Naive thymus-derived CD4-positive, alpha-beta T cell (primary cell): ENCODE measurements at regions of chr15 and their contacts with region 1.

Region 1: GRCh38 chr15:75201609-75202250 is at the start of gene C15orf39:
- DNase-seq: peak; percentile 66 to 88 (median 84)
- ATAC-seq: peak; percentile 78
- H3K4me3 ChIP-seq: peak within 1 kb of the TSS; percentile 84
- H3K4me3 Mint-ChIP-seq: peak within 1 kb of the TSS; percentile 89 to 98 (median 94)
- H3K27ac ChIP-seq: peak within 1 kb of the TSS; percentile 92
- H3K27ac Mint-ChIP-seq: peak within 1 kb of the TSS; percentile 69 to 95 (median 88)
- H3K4me1 ChIP-seq: peaks cover 26 to 27% of the 10 kb centered on the region in 2 donors
- H3K4me1 Mint-ChIP-seq: peaks cover 19 to 68% (median 39%) of the 10 kb centered on the region in 7 donors
- H3K27me3 ChIP-seq: no peaks in the 10 kb centered on the region
- H3K27me3 Mint-ChIP-seq: no peaks in the 10 kb centered on the region
- total RNA-seq, gene C15orf39: 30.9 to 124 (median 50.5) TPM

Region 2: DNA sequence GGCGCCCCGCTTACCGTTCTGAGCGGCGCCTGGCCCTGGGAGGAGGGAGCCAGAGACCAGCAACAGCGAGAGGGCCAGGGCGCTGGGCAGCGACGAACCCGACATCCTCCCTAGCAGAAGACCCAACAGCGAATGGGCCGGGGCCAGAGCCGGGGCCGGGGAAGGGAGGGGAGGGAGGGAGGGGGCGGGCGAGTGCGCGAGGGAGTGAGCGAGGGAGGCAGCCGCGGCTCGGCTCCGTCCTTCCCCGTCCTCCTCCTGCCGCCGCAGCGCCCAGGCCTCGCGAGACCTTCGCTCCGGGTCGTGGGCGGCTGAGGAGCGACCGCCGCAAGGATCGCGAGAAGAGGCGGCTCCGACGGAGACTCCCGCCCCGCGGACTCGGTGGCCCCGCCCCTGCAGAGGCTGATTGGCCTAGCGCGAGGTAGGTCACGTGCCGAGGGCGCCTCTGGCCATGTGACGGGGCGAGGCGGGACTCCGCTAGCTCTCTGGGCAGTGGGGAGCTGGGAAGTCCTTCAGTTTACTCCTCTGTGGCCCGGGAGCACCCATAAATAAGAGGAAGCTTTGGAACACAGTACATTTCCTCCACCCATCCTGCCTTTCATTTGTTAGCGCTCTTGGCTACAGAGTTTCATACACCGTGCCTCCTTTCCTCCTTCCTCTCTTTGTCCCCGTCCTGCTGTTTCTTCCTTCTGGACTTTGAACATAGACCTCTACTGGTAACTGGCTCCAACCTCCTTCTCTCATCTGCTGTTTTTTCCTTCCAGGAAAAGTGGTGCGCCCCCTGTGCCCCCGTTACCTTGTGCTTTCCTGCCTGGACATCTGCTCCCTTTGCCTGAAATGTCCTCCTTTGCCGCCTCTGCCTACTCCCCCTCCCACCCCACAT is 1568.4 kb before region 1 on chr15 and contains the start of gene NPTN:
- CTCF ChIA-PET with region 1: no interaction called
- POLR2A ChIA-PET with region 1: no interaction called
- intact Hi-C with region 1: loop called in 1 of 2 experiments (anchors 5 kb)
- DNase-seq: peak; percentile 96 to 99 (median 97)
- ATAC-seq: peak; percentile 95
- H3K4me3 ChIP-seq: peak within 1 kb of the TSS; percentile 73
- H3K4me3 Mint-ChIP-seq: peak within 1 kb of the TSS; percentile 79 to 97 (median 90)
- H3K27ac ChIP-seq: peak within 1 kb of the TSS; percentile 74
- H3K27ac Mint-ChIP-seq: peak within 1 kb of the TSS; percentile 71 to 96 (median 85)
- H3K4me1 ChIP-seq: peaks cover 16 to 26% of the 10 kb centered on the region in 2 donors
- H3K4me1 Mint-ChIP-seq: peaks cover 33 to 59% (median 49%) of the 10 kb centered on the region in 7 donors
- H3K27me3 ChIP-seq: no peaks in the 10 kb centered on the region
- H3K27me3 Mint-ChIP-seq: peaks cover 5 to 25% (median 8%) of the 10 kb centered on the region in 5 donors
- total RNA-seq, gene NPTN: 26.8 to 48.2 (median 42.6) TPM

Region 3: GRCh38 chr15:74615508-74616365 is 586.0 kb before region 1 on chr15 and contains the start of gene CLK3:
- CTCF ChIA-PET with region 1: no interaction called
- POLR2A ChIA-PET with region 1: no interaction called
- intact Hi-C with region 1: loop called in 1 of 2 experiments (anchors 10 kb)
- DNase-seq: peak; percentile 92 to 98 (median 96)
- ATAC-seq: peak; percentile 83
- H3K4me3 ChIP-seq: peak within 1 kb of the TSS; percentile 79
- H3K4me3 Mint-ChIP-seq: peak within 1 kb of the TSS; percentile 91 to 96 (median 93)
- H3K27ac ChIP-seq: peak within 1 kb of the TSS; percentile 100
- H3K27ac Mint-ChIP-seq: peak within 1 kb of the TSS; percentile 92 to 98 (median 95)
- H3K4me1 ChIP-seq: peaks cover 23 to 30% of the 10 kb centered on the region in 2 donors
- H3K4me1 Mint-ChIP-seq: peaks cover 31 to 45% (median 43%) of the 10 kb centered on the region in 7 donors
- H3K27me3 ChIP-seq: no peaks in the 10 kb centered on the region
- H3K27me3 Mint-ChIP-seq: no peaks in the 10 kb centered on the region
- total RNA-seq, gene CLK3: 131 to 273 (median 177) TPM

Region 4: DNA sequence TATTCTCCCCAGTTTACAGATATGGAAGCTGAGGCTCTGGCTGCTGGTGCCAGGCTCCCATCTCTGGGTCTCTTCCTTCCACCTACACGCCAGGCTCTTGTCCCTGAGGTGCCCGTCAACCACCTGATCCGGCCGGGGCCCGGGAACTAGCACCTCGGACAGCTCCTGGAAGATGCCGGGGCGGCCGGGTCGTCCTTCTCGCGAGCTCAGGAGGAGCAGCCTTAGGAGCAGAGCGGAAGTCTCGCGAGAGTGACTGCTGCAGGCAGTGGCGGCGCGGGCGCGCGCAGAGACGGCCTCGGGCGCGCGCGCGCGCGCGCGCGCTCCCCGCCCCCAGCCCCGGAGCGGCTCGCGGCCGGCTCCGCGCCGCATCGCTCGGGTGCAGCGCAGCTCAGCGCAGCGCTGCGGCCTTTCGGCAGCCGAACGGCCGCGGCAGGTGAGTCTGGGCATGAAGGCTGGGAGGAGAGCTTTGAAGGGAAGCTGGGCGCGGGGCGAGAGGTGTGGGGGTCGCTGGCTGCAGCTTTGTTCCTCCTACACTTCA is 206.4 kb before region 1 on chr15 and contains the start of gene SCAMP5:
- CTCF ChIA-PET with region 1: no interaction called
- POLR2A ChIA-PET with region 1: no interaction called
- intact Hi-C with region 1: loop called in 1 of 2 experiments (anchors 1 kb)
- DNase-seq: peak; percentile 81 to 95 (median 91)
- ATAC-seq: peak; percentile 99
- H3K4me3 ChIP-seq: peak within 1 kb of the TSS; percentile 75
- H3K4me3 Mint-ChIP-seq: peak within 1 kb of the TSS; percentile 73 to 97 (median 82)
- H3K27ac ChIP-seq: no peak within 1 kb of the TSS
- H3K27ac Mint-ChIP-seq: peak within 1 kb of the TSS in 4 of 9 donors; percentile 10 to 75 (median 26)
- H3K4me1 ChIP-seq: peaks cover 8 to 9% of the 10 kb centered on the region in 2 donors
- H3K4me1 Mint-ChIP-seq: peaks cover 8 to 20% (median 15%) of the 10 kb centered on the region in 7 donors
- H3K27me3 ChIP-seq: no peaks in the 10 kb centered on the region
- H3K27me3 Mint-ChIP-seq: peaks cover 10 to 37% (median 27%) of the 10 kb centered on the region in 5 donors
- total RNA-seq, gene SCAMP5: 0.35 to 9.5 (median 0.87) TPM

Region 5: GRCh38 chr15:75107908-75108838 is 93.6 kb before region 1 on chr15:
- CTCF ChIA-PET with region 1: no interaction called
- POLR2A ChIA-PET with region 1: no interaction called
- intact Hi-C with region 1: loop called in 1 of 2 experiments (anchors 1 kb)
- DNase-seq: peak in 2 of 9 donors; percentile 24 to 76
- ATAC-seq: peak; percentile 83
- H3K4me3 ChIP-seq: no peak overlapping the region
- H3K4me3 Mint-ChIP-seq: peak overlapping the region in 1 of 10 donors; percentile 69
- H3K27ac ChIP-seq: no peak overlapping the region
- H3K27ac Mint-ChIP-seq: peak overlapping the region in 1 of 9 donors; percentile 86
- H3K4me1 ChIP-seq: peaks cover 0 to 23% of the 10 kb centered on the region in 2 donors
- H3K4me1 Mint-ChIP-seq: peaks cover 0 to 56% (median 5%) of the 10 kb centered on the region in 7 donors
- H3K27me3 ChIP-seq: no peaks in the 10 kb centered on the region
- H3K27me3 Mint-ChIP-seq: peaks cover 6 to 31% (median 8%) of the 10 kb centered on the region in 5 donors

Region 6: GRCh38 chr15:75625542-75626347 is 424.0 kb after region 1 on chr15 and contains the start of gene SNUPN:
- CTCF ChIA-PET with region 1: no interaction called
- POLR2A ChIA-PET with region 1: no interaction called
- intact Hi-C with region 1: loop called in 1 of 2 experiments (anchors 5 kb)
- DNase-seq: peak; percentile 75 to 92 (median 88)
- ATAC-seq: peak; percentile 97
- H3K4me3 ChIP-seq: peak within 1 kb of the TSS; percentile 100
- H3K4me3 Mint-ChIP-seq: peak within 1 kb of the TSS; percentile 85 to 99 (median 92)
- H3K27ac ChIP-seq: peak within 1 kb of the TSS; percentile 97
- H3K27ac Mint-ChIP-seq: peak within 1 kb of the TSS; percentile 92 to 99 (median 96)
- H3K4me1 ChIP-seq: peaks cover 11 to 16% of the 10 kb centered on the region in 2 donors
- H3K4me1 Mint-ChIP-seq: peaks cover 22 to 41% (median 35%) of the 10 kb centered on the region in 7 donors
- H3K27me3 ChIP-seq: no peaks in the 10 kb centered on the region
- H3K27me3 Mint-ChIP-seq: no peaks in the 10 kb centered on the region
- total RNA-seq, gene SNUPN: 16.5 to 33.2 (median 21.5) TPM